A549 (cell line): ENCODE measurements at regions of chr5 and their contacts with region 1.

Region 1: GRCh38 chr5:146965761-146966659 is 87.5 kb upstream of the PPP2R2B start:
- DNase-seq: peak; percentile 30 to 78
- ATAC-seq: peak; percentile 94 to 99
- H3K4me3 ChIP-seq: no peak overlapping the region
- H3K27ac ChIP-seq: no peak overlapping the region
- H3K4me1 ChIP-seq: no peaks in the 10 kb centered on the region
- CTCF ChIP-seq: peak; percentile 86
- EP300 ChIP-seq: no peak
- POLR2A ChIP-seq: no peak
- RAD21 ChIP-seq: peak; percentile 88 to 89

Region 2: GRCh38 chr5:146533260-146533857 is 432.7 kb before region 1 on chr5:
- CTCF ChIA-PET with region 1: interaction called, 121 read pairs
- POLR2A ChIA-PET with region 1: no interaction called
- DNase-seq: peak; percentile 69 to 77
- ATAC-seq: peak; percentile 93 to 97
- H3K4me3 ChIP-seq: no peak overlapping the region
- H3K27ac ChIP-seq: no peak overlapping the region
- H3K4me1 ChIP-seq: no peaks in the 10 kb centered on the region
- CTCF ChIP-seq: peak; percentile 86
- EP300 ChIP-seq: no peak
- POLR2A ChIP-seq: no peak
- RAD21 ChIP-seq: peak; percentile 82 to 89

Region 3: GRCh38 chr5:146541958-146542849 is 423.8 kb before region 1 on chr5:
- CTCF ChIA-PET with region 1: interaction called, 121 read pairs
- POLR2A ChIA-PET with region 1: no interaction called
- DNase-seq: peak; percentile 69 to 70
- ATAC-seq: peak; percentile 97 to 99
- H3K4me3 ChIP-seq: no peak overlapping the region
- H3K27ac ChIP-seq: no peak overlapping the region
- H3K4me1 ChIP-seq: no peaks in the 10 kb centered on the region
- CTCF ChIP-seq: peak; percentile 80
- EP300 ChIP-seq: no peak
- POLR2A ChIP-seq: no peak
- RAD21 ChIP-seq: peak; percentile 89 to 94

Region 4: GRCh38 chr5:146548781-146549449 is 417.1 kb before region 1 on chr5:
- CTCF ChIA-PET with region 1: interaction called, 12 read pairs
- POLR2A ChIA-PET with region 1: no interaction called
- DNase-seq: no peak
- ATAC-seq: no peak
- H3K4me3 ChIP-seq: no peak overlapping the region
- H3K27ac ChIP-seq: no peak overlapping the region
- H3K4me1 ChIP-seq: no peaks in the 10 kb centered on the region
- CTCF ChIP-seq: no peak
- EP300 ChIP-seq: no peak
- POLR2A ChIP-seq: no peak
- RAD21 ChIP-seq: no peak

Region 5: GRCh38 chr5:146565764-146566367 is 400.1 kb before region 1 on chr5:
- CTCF ChIA-PET with region 1: interaction called, 11 read pairs
- POLR2A ChIA-PET with region 1: no interaction called
- DNase-seq: peak; percentile 67 to 82
- ATAC-seq: peak; percentile 94 to 98
- H3K4me3 ChIP-seq: no peak overlapping the region
- H3K27ac ChIP-seq: no peak overlapping the region
- H3K4me1 ChIP-seq: no peaks in the 10 kb centered on the region
- CTCF ChIP-seq: peak; percentile 58
- EP300 ChIP-seq: no peak
- POLR2A ChIP-seq: no peak
- RAD21 ChIP-seq: peak; percentile 55 to 71; a peak in 4 of 5 replicates

Region 6: DNA sequence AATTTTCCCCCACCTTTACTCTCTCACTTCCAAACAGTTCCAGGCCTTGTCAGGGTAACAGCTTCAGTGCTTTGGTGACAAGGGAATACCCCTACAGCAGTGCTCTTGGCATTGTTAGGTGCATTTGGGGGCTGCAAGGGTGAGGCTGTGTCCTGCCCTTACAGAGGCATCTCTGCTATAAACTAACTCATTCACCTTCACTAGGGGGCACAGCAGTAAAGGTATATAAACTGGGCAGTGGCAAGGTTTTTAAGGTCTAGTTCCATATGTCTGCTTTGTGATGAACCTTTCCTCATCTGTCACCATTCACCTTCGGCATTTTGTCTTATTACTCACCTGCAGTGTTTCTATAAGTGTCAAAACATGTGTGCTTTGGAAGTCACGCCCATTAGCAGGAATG is 370.9 kb before region 1 on chr5:
- CTCF ChIA-PET with region 1: interaction called, 16 read pairs
- POLR2A ChIA-PET with region 1: no interaction called
- DNase-seq: no peak
- ATAC-seq: peak; percentile 47 to 72; a peak in 5 of 6 replicates
- H3K4me3 ChIP-seq: no peak overlapping the region
- H3K27ac ChIP-seq: no peak overlapping the region
- H3K4me1 ChIP-seq: no peaks in the 10 kb centered on the region
- CTCF ChIP-seq: no peak; the same call in 2 of the 3 replicates
- EP300 ChIP-seq: no peak
- POLR2A ChIP-seq: no peak
- RAD21 ChIP-seq: peak; percentile 22 to 42; a peak in 2 of 5 replicates

Region 7: GRCh38 chr5:146947181-146947941 is 18.6 kb before region 1 on chr5:
- CTCF ChIA-PET with region 1: interaction called, 24 read pairs
- POLR2A ChIA-PET with region 1: no interaction called
- DNase-seq: peak; percentile 1 to 27
- ATAC-seq: peak in 1 of 2 experiments; percentile 50; a peak in 1 of 6 replicates
- H3K4me3 ChIP-seq: no peak overlapping the region
- H3K27ac ChIP-seq: no peak overlapping the region
- H3K4me1 ChIP-seq: no peaks in the 10 kb centered on the region
- CTCF ChIP-seq: no peak
- EP300 ChIP-seq: no peak
- POLR2A ChIP-seq: no peak
- RAD21 ChIP-seq: peak in 1 of 2 experiments; percentile 36; a peak in 1 of 5 replicates